Mammary epithelial cell (primary cell): ENCODE measurements at regions of chr12 and their contacts with region 1.

Region 1: DNA sequence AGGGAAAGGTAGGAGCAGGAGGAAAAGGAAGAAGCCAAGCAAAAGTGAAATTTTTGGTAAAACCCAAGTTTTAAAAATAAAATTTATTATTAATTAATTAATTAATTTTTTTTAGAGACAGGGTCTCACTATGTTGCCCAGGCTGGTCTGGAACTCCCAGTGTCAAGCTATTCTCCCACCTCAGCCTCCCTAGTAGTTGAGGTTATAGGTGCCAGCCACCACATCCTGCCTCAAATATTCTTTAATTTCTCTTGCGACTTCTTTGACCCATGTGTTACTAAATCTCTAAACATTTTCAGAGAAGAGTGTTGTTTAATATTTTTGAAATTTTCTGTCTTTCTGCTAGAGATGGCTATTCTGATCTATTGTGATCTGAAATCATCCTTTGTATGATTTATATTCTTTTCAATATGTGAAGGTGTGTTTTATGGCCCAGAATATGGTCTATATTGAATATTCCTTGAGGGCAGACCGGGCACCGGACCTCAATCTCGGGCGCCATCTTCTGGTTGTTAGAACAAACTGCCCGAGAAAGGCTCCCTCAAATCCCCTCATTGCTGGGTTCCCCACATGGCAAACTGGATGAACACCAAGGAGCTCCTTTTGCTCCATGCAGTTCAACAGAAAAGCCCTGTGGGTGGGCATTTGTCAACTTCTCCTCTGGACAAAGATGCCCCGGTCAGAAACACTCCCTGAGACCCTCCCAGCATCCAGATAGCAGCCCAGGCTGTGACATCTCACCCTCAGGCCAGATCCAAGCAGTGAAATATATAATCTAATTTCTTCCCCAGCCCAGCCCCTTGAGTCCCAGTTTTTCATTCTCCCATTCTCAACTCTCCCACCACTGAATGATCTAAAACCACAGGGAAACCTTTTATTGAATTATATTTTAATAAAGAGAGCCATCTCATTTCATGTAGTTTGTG is 110.5 kb downstream of the ASCL4 start:
- DNase-seq: peak; percentile 12
- H3K4me3 ChIP-seq: no peak overlapping the region
- H3K27ac ChIP-seq: no peak overlapping the region
- H3K4me1 ChIP-seq: no peaks in the 10 kb centered on the region
- H3K27me3 ChIP-seq: peaks cover 9% of the 10 kb centered on the region
- CTCF ChIP-seq: peak; percentile 71 to 82

Region 2: DNA sequence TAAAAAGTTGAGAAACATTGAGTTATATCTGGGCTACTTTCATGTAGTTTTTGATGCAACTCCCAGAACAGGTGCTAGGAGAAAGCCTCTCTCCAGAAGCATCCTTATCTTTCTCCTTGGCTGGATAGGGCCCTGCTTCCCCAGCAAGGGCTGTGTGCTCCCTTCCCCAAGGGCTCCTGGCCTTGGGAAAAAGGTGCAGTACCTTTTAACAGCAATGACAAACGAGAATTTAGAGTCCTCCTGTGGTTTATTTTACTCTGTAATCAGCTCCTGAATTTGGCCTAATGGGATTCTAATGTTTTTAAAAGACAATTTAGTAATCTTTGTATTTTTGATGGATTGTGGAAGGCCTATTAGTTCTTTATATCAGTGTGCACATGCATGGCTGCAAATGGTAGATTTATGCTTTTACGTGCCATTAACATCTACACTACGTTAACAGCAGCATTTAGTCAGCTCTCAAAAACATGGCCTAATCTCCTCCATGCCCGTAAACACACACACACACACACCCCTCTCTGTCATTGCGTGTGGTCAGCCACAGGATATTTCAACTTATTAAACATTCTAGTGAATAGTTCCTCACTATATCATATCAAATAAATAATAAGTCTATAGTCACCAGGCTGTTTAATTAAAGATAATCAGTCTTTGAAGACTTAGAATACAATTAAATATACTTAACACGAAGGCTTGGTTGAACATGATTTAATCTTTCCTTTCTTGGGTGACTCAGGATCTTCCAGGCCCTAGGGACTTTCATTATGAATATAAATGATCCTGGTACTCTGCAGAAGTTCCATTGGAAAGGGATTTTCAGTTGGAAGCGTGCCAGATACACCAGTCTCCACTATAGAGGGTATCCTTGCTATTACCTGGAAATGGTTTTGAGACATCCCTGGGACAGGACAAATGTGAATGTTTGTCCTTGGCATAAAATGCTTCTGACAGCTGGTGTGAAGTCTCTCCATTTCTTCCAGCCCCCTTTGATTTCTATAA is 380.8 kb before region 1 on chr12:
- CTCF ChIA-PET with region 1: no interaction called
- dilution Hi-C with region 1: no loop called
- in situ Hi-C with region 1: no loop called
- intact Hi-C with region 1: no loop called
- DNase-seq: no peak
- H3K4me3 ChIP-seq: no peak overlapping the region
- H3K27ac ChIP-seq: no peak overlapping the region
- H3K4me1 ChIP-seq: no peaks in the 10 kb centered on the region
- H3K27me3 ChIP-seq: no peaks in the 10 kb centered on the region
- CTCF ChIP-seq: no peak

Region 3: GRCh38 chr12:107593713-107594381 is 291.2 kb before region 1 on chr12:
- CTCF ChIA-PET with region 1: no interaction called
- dilution Hi-C with region 1: no loop called
- in situ Hi-C with region 1: no loop called
- intact Hi-C with region 1: no loop called
- DNase-seq: no peak
- H3K4me3 ChIP-seq: no peak overlapping the region
- H3K27ac ChIP-seq: no peak overlapping the region
- H3K4me1 ChIP-seq: no peaks in the 10 kb centered on the region
- H3K27me3 ChIP-seq: no peaks in the 10 kb centered on the region
- CTCF ChIP-seq: no peak

Region 4: GRCh38 chr12:107670999-107671643 is 213.9 kb before region 1 on chr12:
- CTCF ChIA-PET with region 1: interaction called, 5 read pairs
- dilution Hi-C with region 1: no loop called
- in situ Hi-C with region 1: loop called in 1 of 2 experiments (anchors 10 kb)
- intact Hi-C with region 1: loop called (anchors 1 kb)
- DNase-seq: no peak
- H3K4me3 ChIP-seq: no peak overlapping the region
- H3K27ac ChIP-seq: no peak overlapping the region
- H3K4me1 ChIP-seq: no peaks in the 10 kb centered on the region
- H3K27me3 ChIP-seq: no peaks in the 10 kb centered on the region
- CTCF ChIP-seq: peak; percentile 51 to 63

Region 5: GRCh38 chr12:107760809-107761501 is 124.1 kb before region 1 on chr12 and contains the start of gene PRDM4:
- CTCF ChIA-PET with region 1: no interaction called
- dilution Hi-C with region 1: no loop called
- in situ Hi-C with region 1: loop called (anchors 10 kb)
- intact Hi-C with region 1: loop called (anchors 1 kb)
- DNase-seq: peak; percentile 91
- H3K4me3 ChIP-seq: peak within 1 kb of the TSS; percentile 71 to 92 (median 75)
- H3K27ac ChIP-seq: peak within 1 kb of the TSS; percentile 90
- H3K4me1 ChIP-seq: peaks cover 21% of the 10 kb centered on the region
- H3K27me3 ChIP-seq: no peaks in the 10 kb centered on the region
- CTCF ChIP-seq: peak; percentile 23 to 33
- total RNA-seq, gene PRDM4: 25.3 to 32.3 TPM

Region 6: DNA sequence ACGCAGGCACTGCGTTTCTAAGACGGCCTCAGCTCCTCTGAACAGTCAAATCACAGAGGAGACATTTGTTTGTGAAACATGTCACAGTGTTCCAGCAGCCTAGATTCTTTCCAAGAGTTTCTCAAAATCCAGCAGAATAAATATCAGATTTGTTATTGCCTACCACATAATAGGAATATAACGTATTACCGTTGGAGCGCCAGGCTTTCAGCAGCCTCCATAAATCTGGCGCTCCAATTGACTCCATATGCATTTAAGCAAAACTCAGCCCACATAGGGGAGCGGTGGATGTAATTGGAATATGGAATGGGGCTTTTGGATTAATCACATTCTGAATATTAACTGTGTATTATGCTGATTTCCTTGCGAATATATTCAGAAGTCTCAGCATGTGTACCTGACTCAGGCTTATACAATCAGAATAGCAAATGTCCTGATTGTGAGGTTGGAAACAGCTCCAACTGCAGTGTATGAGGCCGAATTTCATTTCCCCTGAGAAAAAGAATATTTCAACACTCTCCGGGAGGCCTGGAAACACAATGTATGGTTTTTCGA is 63.4 kb after region 1 on chr12:
- CTCF ChIA-PET with region 1: no interaction called
- dilution Hi-C with region 1: no loop called
- in situ Hi-C with region 1: no loop called
- intact Hi-C with region 1: no loop called
- DNase-seq: no peak
- H3K4me3 ChIP-seq: no peak overlapping the region
- H3K27ac ChIP-seq: no peak overlapping the region
- H3K4me1 ChIP-seq: no peaks in the 10 kb centered on the region
- H3K27me3 ChIP-seq: peaks cover 3% of the 10 kb centered on the region
- CTCF ChIP-seq: no peak

Region 7: GRCh38 chr12:107967170-107967569 is 82.1 kb after region 1 on chr12:
- CTCF ChIA-PET with region 1: no interaction called
- dilution Hi-C with region 1: no loop called
- in situ Hi-C with region 1: no loop called
- intact Hi-C with region 1: no loop called
- DNase-seq: no peak
- H3K4me3 ChIP-seq: no peak overlapping the region
- H3K27ac ChIP-seq: no peak overlapping the region
- H3K4me1 ChIP-seq: no peaks in the 10 kb centered on the region
- H3K27me3 ChIP-seq: no peaks in the 10 kb centered on the region
- CTCF ChIP-seq: no peak